ENCODE measurements at regions of chr16 and their contacts with region 1.

Region 1: GRCh38 chr16:89972244-89973234 is 24.0 kb downstream of the DEF8 start:
- DNase-seq: peak; percentile 94
- ATAC-seq: peak; percentile 94
- H3K4me3 Mint-ChIP-seq: peak overlapping the region; percentile 99
- H3K27ac Mint-ChIP-seq: peak overlapping the region; percentile 95
- H3K4me1 Mint-ChIP-seq: peaks cover 32% of the 10 kb centered on the region
- H3K27me3 Mint-ChIP-seq: no peaks in the 10 kb centered on the region

Region 2: GRCh38 chr16:89945670-89946069 is 26.9 kb before region 1 on chr16:
- CTCF ChIA-PET with region 1: no interaction called
- POLR2A ChIA-PET with region 1: no interaction called
- intact Hi-C with region 1: loop called in 1 of 2 experiments (anchors 1 kb)
- DNase-seq: no peak
- ATAC-seq: no peak
- H3K4me3 Mint-ChIP-seq: no peak overlapping the region
- H3K27ac Mint-ChIP-seq: no peak overlapping the region
- H3K4me1 Mint-ChIP-seq: no peaks in the 10 kb centered on the region
- H3K27me3 Mint-ChIP-seq: peaks cover 20% of the 10 kb centered on the region

Region 3: DNA sequence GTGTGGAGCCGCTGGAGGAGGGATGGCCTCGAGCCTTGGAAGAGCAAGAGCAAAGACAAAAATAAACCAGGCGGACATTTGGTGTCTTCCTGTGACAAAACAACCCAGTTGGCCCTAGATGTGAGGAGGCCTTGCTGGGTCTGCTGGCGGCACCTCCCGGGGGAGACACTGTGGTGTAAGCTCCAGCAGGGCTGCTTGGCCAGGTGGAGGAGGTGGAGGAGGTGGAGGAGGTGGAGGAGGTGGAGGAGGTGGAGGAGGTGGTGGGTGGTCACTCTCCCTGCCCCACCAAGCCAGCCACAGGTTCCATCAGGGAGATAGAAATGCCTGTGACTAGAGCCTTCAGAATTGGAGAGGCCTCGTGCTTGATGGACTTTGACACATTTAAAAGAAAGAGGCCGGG is 14.6 kb after region 1 on chr16:
- CTCF ChIA-PET with region 1: no interaction called
- POLR2A ChIA-PET with region 1: no interaction called
- intact Hi-C with region 1: no loop called
- DNase-seq: no peak
- ATAC-seq: no peak
- H3K4me3 Mint-ChIP-seq: no peak overlapping the region
- H3K27ac Mint-ChIP-seq: no peak overlapping the region
- H3K4me1 Mint-ChIP-seq: peaks cover 11% of the 10 kb centered on the region
- H3K27me3 Mint-ChIP-seq: no peaks in the 10 kb centered on the region

Region 4: GRCh38 chr16:90012978-90013745 is 40.6 kb after region 1 on chr16:
- CTCF ChIA-PET with region 1: no interaction called
- POLR2A ChIA-PET with region 1: no interaction called
- intact Hi-C with region 1: no loop called
- DNase-seq: no peak
- ATAC-seq: no peak
- H3K4me3 Mint-ChIP-seq: no peak overlapping the region
- H3K27ac Mint-ChIP-seq: no peak overlapping the region
- H3K4me1 Mint-ChIP-seq: peaks cover 15% of the 10 kb centered on the region
- H3K27me3 Mint-ChIP-seq: no peaks in the 10 kb centered on the region